ENCODE measurements at regions of chr16 and their contacts with region 1.

Region 1: DNA sequence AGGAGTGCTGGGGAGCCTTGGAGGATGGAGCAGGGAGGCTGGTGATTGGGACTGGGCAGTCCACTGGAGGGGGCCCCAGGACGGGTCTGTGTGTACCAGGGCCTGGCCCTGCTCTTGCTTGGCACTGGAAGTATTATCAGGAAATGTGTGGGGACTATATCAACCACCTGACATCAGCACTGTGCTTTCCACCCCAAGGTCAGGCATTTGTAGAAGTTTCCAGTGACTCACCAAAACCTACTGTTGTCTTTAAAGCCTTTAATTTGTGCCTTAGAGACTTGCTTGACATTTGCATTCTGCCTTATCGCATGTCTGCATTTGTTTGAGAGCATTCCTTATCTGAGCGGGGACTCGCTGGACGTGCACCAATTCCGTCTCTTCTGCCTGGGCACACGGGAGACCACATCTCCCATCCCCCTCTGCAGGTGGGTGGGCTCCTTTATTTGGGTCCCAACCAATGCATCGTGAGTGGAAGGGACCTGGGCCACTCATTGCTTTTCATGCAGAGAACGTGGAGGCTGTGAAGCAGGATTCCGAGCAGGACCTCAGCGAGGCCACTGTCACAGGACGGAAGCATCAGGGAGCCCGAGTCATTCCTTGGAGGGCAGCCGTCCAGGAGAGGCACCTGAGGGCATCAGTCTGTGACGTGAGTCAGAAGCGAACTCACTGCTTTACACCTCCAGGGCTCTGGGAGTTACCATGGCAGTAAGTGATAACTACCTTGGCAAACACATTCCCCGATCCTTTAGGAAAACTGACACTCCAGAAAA is 323.3 kb downstream of the FOXL1 start:
- DNase-seq: no peak
- H3K4me3 ChIP-seq: no peak overlapping the region
- CTCF ChIP-seq: no peak

Region 2: GRCh38 chr16:86865524-86866301 is 36.0 kb before region 1 on chr16:
- in situ Hi-C with region 1: no loop called
- DNase-seq: no peak
- H3K4me3 ChIP-seq: no peak overlapping the region
- CTCF ChIP-seq: no peak

Region 3: GRCh38 chr16:86946396-86946795 is 44.7 kb after region 1 on chr16:
- in situ Hi-C with region 1: loop called (anchors 5 kb)
- DNase-seq: no peak
- H3K4me3 ChIP-seq: no peak overlapping the region
- CTCF ChIP-seq: no peak